ENCODE measurements at regions of chr15 and their contacts with region 1.

Region 1: GRCh38 chr15:38707802-38708671 is 143.4 kb upstream of the RASGRP1 start:
- DNase-seq: no peak
- H3K4me3 Mint-ChIP-seq: no peak overlapping the region
- H3K27ac Mint-ChIP-seq: no peak overlapping the region
- H3K4me1 Mint-ChIP-seq: peaks cover 26% of the 10 kb centered on the region
- H3K27me3 Mint-ChIP-seq: peaks cover 10% of the 10 kb centered on the region

Region 2: GRCh38 chr15:38817427-38818156 is 109.6 kb after region 1 on chr15:
- intact Hi-C with region 1: loop called (anchors 5 kb)
- DNase-seq: peak; percentile 66
- H3K4me3 Mint-ChIP-seq: no peak overlapping the region
- H3K27ac Mint-ChIP-seq: no peak overlapping the region
- H3K4me1 Mint-ChIP-seq: peaks cover 4% of the 10 kb centered on the region
- H3K27me3 Mint-ChIP-seq: peaks cover 14% of the 10 kb centered on the region

Region 3: DNA sequence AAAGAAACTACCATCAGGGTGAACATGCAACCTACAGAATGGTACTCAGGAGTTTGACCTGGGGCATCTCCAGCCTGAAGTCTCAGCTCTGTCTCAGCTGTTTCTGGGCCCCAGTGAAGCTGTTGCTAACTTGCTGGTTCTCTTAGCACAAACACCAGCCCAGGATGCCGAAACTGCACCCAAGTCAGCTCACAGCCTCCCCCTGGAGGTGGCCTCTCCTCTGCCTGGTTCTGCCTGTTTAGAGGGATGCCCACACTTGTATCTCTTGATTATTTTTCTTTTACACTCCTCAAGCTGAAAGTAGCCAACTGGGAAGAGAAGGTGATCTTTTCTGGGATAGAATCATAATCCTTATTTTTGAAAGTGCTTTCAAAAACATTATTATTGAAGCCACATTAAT is 145.6 kb after region 1 on chr15:
- intact Hi-C with region 1: loop called (anchors 1 kb)
- DNase-seq: no peak
- H3K4me3 Mint-ChIP-seq: no peak overlapping the region
- H3K27ac Mint-ChIP-seq: no peak overlapping the region
- H3K4me1 Mint-ChIP-seq: no peaks in the 10 kb centered on the region
- H3K27me3 Mint-ChIP-seq: peaks cover 6% of the 10 kb centered on the region

Region 4: GRCh38 chr15:39631357-39631756 is 923.3 kb after region 1 on chr15:
- intact Hi-C with region 1: loop called (anchors 1 kb)
- DNase-seq: no peak
- H3K4me3 Mint-ChIP-seq: peak overlapping the region; percentile 77
- H3K27ac Mint-ChIP-seq: peak overlapping the region; percentile 95
- H3K4me1 Mint-ChIP-seq: peaks cover 51% of the 10 kb centered on the region
- H3K27me3 Mint-ChIP-seq: no peaks in the 10 kb centered on the region

Region 5: GRCh38 chr15:39756806-39757522 is 1048.9 kb after region 1 on chr15:
- intact Hi-C with region 1: loop called (anchors 1 kb)
- DNase-seq: no peak
- H3K4me3 Mint-ChIP-seq: no peak overlapping the region
- H3K27ac Mint-ChIP-seq: no peak overlapping the region
- H3K4me1 Mint-ChIP-seq: no peaks in the 10 kb centered on the region
- H3K27me3 Mint-ChIP-seq: peaks cover 44% of the 10 kb centered on the region